T-cell (primary cell): ENCODE measurements at regions of chr5 and their contacts with region 1.

Region 1: DNA sequence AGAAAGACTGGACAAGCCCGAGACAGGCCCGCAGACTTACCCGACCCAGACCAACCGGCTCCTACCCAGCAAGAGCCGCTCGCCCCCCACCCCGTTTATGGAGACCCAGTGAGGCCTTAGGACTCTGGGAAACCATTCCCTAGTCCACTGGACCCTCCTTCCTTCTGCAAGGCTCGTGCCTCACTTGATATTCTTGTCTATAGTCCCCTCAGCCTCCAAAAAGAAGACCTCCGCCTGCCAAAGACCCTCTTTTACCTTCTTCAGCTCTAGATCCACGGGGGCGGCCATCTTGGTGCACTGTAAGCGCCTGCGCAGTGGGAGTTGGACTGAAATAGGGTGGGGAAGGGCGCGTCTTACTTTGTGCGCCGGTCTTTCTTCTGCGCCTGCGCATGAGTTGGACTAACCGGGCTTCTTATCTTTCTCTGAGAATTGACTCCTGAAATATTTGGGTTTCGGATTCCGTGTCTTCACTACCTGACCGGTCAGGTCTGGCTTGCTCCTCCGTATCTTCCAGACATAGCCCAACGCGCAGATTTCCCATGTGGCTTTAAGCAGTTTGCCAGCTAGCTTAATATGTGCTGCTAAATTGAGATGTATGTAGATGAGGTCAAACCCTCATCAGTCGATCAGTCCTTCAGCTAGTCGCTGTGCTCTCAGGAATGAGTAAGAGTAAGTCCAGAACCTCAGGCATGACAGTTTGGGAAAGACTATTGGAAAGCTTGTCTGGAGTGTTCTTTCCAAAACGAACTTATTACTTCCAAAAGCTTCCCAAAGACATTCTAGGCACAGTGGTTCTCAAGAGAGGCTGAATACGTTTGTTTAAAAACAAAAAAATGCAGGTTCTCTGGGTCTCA is at the start of gene PFDN1:
- DNase-seq: peak; percentile 79 to 95 (median 89)
- ATAC-seq: peak; percentile 99
- H3K4me3 ChIP-seq: peak within 1 kb of the TSS; percentile 91 to 96
- H3K4me3 Mint-ChIP-seq: peak within 1 kb of the TSS; percentile 85 to 99 (median 98)
- H3K27ac ChIP-seq: peak within 1 kb of the TSS; percentile 75
- H3K27ac Mint-ChIP-seq: peak within 1 kb of the TSS; percentile 92 to 98
- H3K4me1 ChIP-seq: peaks cover 12 to 14% of the 10 kb centered on the region in 2 experiments
- H3K4me1 Mint-ChIP-seq: peaks cover 27 to 37% (median 34%) of the 10 kb centered on the region in 3 donors
- H3K27me3 ChIP-seq: peaks cover 0 to 4% of the 10 kb centered on the region in 2 experiments
- H3K27me3 Mint-ChIP-seq: peaks cover 0 to 4% of the 10 kb centered on the region in 2 donors
- total RNA-seq, gene PFDN1: 26.9 to 32.2 (median 28.1) TPM

Region 2: DNA sequence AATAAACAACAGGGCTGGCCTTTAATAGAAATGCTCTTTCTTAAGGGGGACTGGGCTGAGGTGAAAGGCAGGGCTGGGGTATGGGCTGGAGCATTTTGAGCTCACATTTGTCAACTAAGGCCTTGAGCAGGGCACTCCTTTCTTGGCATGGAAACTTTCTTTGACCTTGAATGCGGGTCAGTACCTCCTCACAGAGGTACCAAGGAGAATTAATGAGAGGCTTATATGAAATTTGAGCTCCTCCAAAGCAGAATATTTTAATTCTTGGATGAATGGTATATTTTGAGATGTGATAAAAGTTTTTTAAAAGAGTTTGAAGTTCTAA is 125.0 kb before region 1 on chr5:
- CTCF ChIA-PET with region 1: no interaction called
- POLR2A ChIA-PET with region 1: interaction called in 1 of 2 experiments, 11 read pairs
- DNase-seq: no peak
- ATAC-seq: no peak
- H3K4me3 ChIP-seq: no peak overlapping the region
- H3K4me3 Mint-ChIP-seq: no peak overlapping the region
- H3K27ac ChIP-seq: no peak overlapping the region
- H3K27ac Mint-ChIP-seq: no peak overlapping the region
- H3K4me1 ChIP-seq: peaks cover 8 to 14% of the 10 kb centered on the region in 2 experiments
- H3K4me1 Mint-ChIP-seq: peaks cover 10 to 14% (median 13%) of the 10 kb centered on the region in 3 donors
- H3K27me3 ChIP-seq: peaks cover 0 to 7% of the 10 kb centered on the region in 2 experiments
- H3K27me3 Mint-ChIP-seq: no peaks in the 10 kb centered on the region